ENCODE measurements at regions of chr7 and their contacts with region 1.

Region 1: GRCh38 chr7:50369143-50370026 is 64.9 kb downstream of the IKZF1 start:
- DNase-seq: peak; percentile 73
- ATAC-seq: peak; percentile 20
- H3K4me3 Mint-ChIP-seq: peak overlapping the region; percentile 18
- H3K27ac Mint-ChIP-seq: peak overlapping the region; percentile 85
- H3K4me1 Mint-ChIP-seq: peaks cover 94% of the 10 kb centered on the region
- H3K27me3 Mint-ChIP-seq: no peaks in the 10 kb centered on the region

Region 2: DNA sequence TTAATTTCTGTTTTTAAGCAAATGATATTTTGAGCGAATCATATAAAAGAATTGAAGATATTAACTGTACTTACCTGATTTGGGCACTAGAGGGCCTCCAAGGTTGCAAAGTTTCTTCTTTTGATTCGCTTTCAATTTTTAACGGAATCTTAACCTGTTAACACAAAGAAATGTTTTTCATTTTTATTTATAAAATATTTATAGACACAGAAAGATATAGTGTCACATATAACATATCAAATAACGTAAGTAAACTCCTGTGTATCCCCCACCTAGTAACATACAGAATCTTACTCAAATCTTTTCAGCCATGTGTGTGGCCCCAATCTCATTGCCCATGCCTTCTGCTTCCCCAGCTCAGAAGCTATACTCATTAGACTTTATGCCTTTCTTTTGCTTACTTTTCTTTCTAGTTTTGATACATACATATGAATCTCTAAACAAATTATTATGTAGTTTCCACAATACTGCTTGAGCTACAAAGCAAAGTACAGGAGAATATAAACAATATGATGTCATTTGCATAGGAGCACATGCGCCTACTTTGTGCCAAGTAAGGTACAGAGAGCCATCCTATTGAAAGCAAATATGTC is 226.9 kb before region 1 on chr7:
- CTCF ChIA-PET with region 1: interaction called, 10 read pairs
- DNase-seq: no peak
- ATAC-seq: peak; percentile 67
- H3K4me3 Mint-ChIP-seq: peak overlapping the region; percentile 50
- H3K27ac Mint-ChIP-seq: peak overlapping the region; percentile 81
- H3K4me1 Mint-ChIP-seq: peaks cover 28% of the 10 kb centered on the region
- H3K27me3 Mint-ChIP-seq: peaks cover 16% of the 10 kb centered on the region

Region 3: GRCh38 chr7:50304158-50304910 is 65.1 kb before region 1 on chr7 and contains the start of gene IKZF1:
- CTCF ChIA-PET with region 1: interaction called, 103 read pairs
- DNase-seq: peak; percentile 71
- ATAC-seq: peak; percentile 40
- H3K4me3 Mint-ChIP-seq: peak within 1 kb of the TSS; percentile 91
- H3K27ac Mint-ChIP-seq: peak within 1 kb of the TSS; percentile 97
- H3K4me1 Mint-ChIP-seq: peaks cover 33% of the 10 kb centered on the region
- H3K27me3 Mint-ChIP-seq: no peaks in the 10 kb centered on the region
- total RNA-seq, gene IKZF1: 348 to 374 TPM

Region 4: GRCh38 chr7:50327443-50327842 is 41.9 kb before region 1 on chr7:
- CTCF ChIA-PET with region 1: interaction called, 14 read pairs
- DNase-seq: no peak
- ATAC-seq: no peak
- H3K4me3 Mint-ChIP-seq: no peak overlapping the region
- H3K27ac Mint-ChIP-seq: peak overlapping the region; percentile 25
- H3K4me1 Mint-ChIP-seq: peaks cover 85% of the 10 kb centered on the region
- H3K27me3 Mint-ChIP-seq: no peaks in the 10 kb centered on the region

Region 5: DNA sequence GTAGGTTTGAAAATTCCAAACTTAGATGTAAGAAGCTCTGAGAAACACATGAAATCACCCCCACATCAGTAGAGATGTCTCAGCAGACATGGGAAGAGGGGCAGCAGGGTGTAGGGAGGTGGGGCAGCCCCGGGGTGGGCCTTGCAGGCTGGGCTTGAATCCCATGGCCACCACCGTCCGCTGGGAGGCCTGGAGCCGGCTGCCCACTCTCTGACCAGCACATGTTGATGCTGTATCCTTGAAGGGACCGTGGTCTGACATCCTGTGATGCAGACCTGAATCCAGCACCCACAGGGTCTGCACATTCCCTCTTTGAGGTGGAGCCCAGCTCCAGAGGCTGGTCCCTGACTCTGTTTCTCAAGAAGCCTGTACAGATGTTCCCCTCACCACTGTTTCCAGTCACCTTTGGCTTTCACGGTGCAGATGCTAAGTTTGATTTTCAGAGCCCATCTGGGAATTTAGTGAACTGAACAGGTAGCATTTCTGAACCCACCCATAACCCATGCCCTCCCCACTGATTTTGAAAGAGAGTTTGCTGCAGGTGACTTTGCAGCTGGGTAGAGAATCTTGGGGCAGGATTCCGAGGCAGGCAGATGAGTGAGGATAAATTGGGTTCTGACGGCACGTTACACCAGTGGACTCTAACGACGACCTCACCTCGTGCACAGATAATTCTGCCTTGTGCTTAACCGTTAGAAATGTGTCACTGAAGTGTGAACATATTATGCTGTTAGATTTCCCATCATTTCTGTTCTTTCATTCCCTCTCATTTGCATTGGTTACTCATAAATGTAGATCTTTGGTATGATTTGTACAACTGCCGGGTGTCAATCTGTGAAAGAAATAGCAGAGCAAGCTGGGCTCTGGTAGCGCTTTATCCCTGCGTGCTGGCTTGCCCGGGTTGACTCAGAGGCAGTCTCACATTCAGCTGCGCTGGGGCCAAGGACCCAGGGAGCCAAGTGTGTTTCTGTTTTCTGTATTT is 19.1 kb before region 1 on chr7:
- CTCF ChIA-PET with region 1: interaction called, 207 read pairs
- DNase-seq: peak; percentile 92
- ATAC-seq: peak; percentile 75
- H3K4me3 Mint-ChIP-seq: peak overlapping the region; percentile 64
- H3K27ac Mint-ChIP-seq: peak overlapping the region; percentile 94
- H3K4me1 Mint-ChIP-seq: peaks cover 96% of the 10 kb centered on the region
- H3K27me3 Mint-ChIP-seq: no peaks in the 10 kb centered on the region